ENCODE measurements at regions of chr2 and their contacts with region 1.

Region 1: GRCh38 chr2:174465327-174465726 is 21.5 kb downstream of the GPR155 start:
- DNase-seq: no peak
- H3K4me3 ChIP-seq: no peak overlapping the region
- H3K27ac ChIP-seq: no peak overlapping the region
- H3K4me1 ChIP-seq: no peaks in the 10 kb centered on the region
- H3K27me3 ChIP-seq: no peaks in the 10 kb centered on the region
- CTCF ChIP-seq: no peak

Region 2: DNA sequence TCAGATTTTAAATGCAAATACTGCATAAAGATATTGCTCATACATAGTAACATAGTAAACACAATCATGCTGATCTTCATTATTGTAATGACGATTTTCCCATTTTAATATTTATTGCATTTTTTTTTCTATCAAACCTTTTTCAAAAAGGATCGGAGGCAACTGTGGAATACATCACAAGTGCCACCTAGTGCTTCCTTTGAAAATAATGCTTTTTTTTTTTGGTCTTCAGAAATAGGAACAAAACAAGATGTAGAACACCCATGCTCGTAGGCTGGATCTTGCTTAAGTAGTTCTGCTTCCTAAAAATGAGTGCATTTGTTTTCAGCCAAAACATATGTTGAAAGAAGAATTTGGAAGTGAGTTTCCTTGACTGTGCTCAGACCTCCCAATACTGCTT is 57.2 kb after region 1 on chr2:
- intact Hi-C with region 1: loop called (anchors 5 kb)
- DNase-seq: no peak
- H3K4me3 ChIP-seq: no peak overlapping the region
- H3K27ac ChIP-seq: no peak overlapping the region
- H3K4me1 ChIP-seq: no peaks in the 10 kb centered on the region
- H3K27me3 ChIP-seq: no peaks in the 10 kb centered on the region
- CTCF ChIP-seq: peak; percentile 10 to 22

Region 3: DNA sequence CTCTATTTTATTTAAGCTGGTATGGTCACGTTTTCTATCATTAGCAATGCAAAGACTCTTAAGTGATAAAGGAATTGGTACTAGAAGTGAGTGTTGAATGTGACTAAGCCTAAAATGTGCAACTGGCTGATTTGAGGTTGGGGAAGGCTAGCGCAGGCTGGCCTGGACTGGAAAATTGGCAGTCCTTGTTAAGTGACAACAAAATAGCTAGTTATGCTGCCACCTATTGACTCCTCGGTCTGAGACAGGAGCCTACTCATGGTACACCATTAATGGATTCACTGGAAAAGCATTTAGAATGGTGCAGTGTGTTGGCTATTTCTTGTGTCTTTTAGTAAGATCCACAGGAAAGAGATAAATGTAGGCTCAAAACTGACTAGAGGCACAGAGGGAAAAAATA is 138.0 kb after region 1 on chr2:
- intact Hi-C with region 1: loop called (anchors 10 kb)
- DNase-seq: peak; percentile 72 to 85
- H3K4me3 ChIP-seq: no peak overlapping the region
- H3K27ac ChIP-seq: peak overlapping the region in 1 of 2 donors; percentile 34
- H3K4me1 ChIP-seq: peaks cover 0 to 54% (median 31%) of the 10 kb centered on the region in 4 donors
- H3K27me3 ChIP-seq: no peaks in the 10 kb centered on the region
- CTCF ChIP-seq: peak; percentile 55 to 57

Region 4: DNA sequence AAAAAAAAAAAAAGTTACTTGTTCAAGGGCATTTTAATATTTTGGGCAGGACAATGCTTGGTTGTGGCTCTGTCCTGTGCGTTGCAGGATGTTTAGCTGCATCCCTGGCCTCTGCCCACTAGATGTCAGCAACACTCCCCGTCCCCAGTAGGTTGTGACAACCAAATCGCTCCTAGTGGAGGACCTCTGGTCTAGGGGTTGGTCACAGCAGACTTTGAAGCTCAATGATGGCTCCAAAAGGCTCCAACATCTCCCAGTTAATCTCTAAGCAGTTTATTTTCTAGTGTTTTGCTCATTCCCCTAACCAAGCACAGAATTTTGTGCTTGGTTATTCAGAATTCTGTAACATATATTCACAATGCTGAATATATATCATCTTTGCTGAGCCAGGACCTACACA is 231.9 kb after region 1 on chr2:
- intact Hi-C with region 1: loop called (anchors 10 kb)
- DNase-seq: peak in 1 of 2 donors; percentile 44
- H3K4me3 ChIP-seq: no peak overlapping the region
- H3K27ac ChIP-seq: no peak overlapping the region
- H3K4me1 ChIP-seq: no peaks in the 10 kb centered on the region
- H3K27me3 ChIP-seq: peaks cover 0 to 3% of the 10 kb centered on the region in 2 donors
- CTCF ChIP-seq: peak; percentile 66 to 74

Region 5: DNA sequence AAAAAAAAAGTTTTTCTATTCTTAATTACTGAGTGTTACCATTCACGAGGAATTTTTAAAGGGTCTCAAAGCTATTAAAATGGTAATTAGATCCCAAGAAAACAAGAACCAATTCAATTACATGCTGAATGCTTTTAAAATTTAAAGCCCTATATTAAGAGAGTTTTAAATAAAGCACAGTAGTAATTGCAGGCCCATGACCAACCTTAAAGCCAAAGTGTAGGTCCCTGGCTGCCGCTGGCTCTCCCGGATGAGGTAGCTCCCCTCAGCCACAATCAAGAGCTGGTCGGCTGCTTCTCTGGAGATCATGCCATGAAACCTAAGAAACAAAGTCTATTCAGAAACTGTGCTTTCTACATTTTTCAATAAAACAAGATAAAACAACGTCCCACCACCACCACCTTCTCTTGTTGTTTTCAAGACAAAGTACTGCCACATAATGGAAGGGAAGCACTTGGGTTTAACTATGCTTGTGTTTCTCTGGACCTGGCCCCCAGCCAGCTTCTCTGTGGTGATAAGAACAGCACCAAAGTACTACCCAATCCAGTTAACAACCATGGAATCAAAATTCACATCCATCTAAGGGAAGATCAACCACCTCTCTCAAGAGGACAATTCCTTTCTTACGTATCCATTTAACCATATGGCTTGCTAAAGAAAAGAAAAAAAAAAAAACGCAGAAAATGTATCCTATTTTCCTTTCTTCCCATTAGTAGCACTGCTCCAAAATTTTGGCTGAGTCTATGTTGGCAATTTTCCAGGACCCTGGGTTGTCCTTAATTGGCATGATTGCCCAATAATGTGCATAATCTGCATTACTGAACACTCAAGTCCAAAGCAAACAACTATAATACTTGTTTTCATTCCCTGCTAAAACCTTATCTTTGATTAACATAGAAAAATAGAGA is 449.8 kb after region 1 on chr2:
- intact Hi-C with region 1: no loop called
- DNase-seq: peak in 1 of 2 donors; percentile 39
- H3K4me3 ChIP-seq: no peak overlapping the region
- H3K27ac ChIP-seq: no peak overlapping the region
- H3K4me1 ChIP-seq: peaks cover 0 to 16% (median 5%) of the 10 kb centered on the region in 4 donors
- H3K27me3 ChIP-seq: no peaks in the 10 kb centered on the region
- CTCF ChIP-seq: no peak

Measured in tibial artery (tissue), 4 donors.